Left colon (tissue), 2 donors: ENCODE measurements at regions of chr12 and their contacts with region 1.

Region 1: DNA sequence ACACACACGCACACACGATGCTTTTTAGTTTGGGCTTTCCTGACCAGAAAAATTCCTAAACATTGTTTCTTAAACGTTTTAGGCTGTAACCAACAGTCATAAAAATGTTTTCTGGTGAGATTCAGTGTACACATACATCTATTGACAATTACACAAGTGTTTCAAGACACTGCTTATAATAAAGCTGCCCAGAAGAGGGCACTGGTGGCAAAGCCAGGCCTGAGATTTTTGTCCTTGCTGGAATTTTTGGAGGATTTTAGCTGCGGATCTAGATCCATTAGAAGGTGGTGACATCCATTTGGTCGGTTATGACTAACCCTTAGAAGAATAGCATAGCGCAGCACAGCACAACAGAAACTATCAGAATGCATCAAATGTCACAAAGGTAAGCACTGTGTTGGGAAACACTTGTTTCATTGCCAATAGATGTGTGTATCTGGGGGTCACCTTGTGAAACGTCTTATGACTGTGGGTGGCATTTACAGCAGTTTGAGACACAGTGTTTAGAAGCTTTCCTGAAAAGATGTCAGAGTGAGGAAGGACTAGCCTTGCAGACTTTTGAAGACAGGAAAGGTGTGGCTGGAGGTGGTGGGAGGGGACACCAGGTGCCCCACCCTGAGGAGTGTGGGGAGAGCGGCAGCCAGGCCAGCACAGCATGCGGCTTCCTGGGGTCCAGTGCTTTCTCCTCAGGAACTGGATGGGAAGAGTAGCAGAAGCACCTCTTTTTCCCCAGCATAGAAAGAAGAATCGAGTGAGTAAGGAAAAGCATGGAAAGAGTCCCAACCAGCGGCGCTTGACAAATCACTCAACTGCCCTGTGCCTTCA is 54.7 kb upstream of the FKBP4 start:
- DNase-seq: peak in 1 of 2 donors; percentile 18
- ATAC-seq: peak; percentile 73

Region 2: GRCh38 chr12:2783936-2784600 is 44.0 kb after region 1 on chr12:
- intact Hi-C with region 1: loop called in 1 of 2 experiments (anchors 5 kb)
- DNase-seq: peak in 1 of 2 donors; percentile 66
- ATAC-seq: peak; percentile 87

Region 3: DNA sequence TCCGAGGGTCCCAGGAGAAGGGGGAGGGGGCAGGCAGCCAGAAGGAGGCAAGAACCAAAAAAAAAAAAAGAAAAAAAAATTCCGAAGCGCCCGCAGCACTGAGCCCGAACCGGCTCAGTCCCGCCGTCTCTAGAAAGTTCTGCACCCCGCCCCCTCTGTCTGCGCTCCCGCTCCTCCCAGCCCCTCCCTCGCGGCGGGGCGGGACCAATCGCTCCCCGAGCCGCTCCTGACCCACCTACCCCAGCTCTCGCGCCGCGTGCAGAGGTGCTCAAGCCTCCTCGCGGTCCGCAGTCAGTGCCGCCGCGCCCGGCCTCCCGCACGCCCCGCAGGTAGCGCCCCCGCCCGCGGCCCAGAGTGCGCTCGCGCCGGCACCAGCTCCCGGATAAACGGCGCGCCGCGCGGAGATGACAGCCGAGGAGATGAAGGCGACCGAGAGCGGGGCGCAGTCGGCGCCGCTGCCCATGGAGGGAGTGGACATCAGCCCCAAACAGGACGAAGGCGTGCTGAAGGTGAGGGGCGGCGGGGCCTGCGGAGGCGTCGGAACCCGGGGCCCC is 54.8 kb after region 1 on chr12 and contains the start of gene FKBP4:
- intact Hi-C with region 1: no loop called
- DNase-seq: peak; percentile 94 to 96
- ATAC-seq: peak; percentile 90
- total RNA-seq, gene FKBP4: 66.3 to 67.9 TPM

Region 4: GRCh38 chr12:3436461-3437065 is 696.5 kb after region 1 on chr12:
- intact Hi-C with region 1: no loop called
- DNase-seq: no peak
- ATAC-seq: no peak